PC-9 (cell line): ENCODE measurements at regions of chr6 and their contacts with region 1.

Region 1: GRCh38 chr6:16849280-16849987 is 88.2 kb upstream of the ATXN1 start:
- DNase-seq: peak; percentile 48 to 92
- H3K4me3 ChIP-seq: peak overlapping the region; percentile 43; the same call in 1 of the 2 replicates
- H3K27ac ChIP-seq: peak overlapping the region; percentile 91
- H3K4me1 ChIP-seq: peaks cover 56% of the 10 kb centered on the region
- H3K27me3 ChIP-seq: no peaks in the 10 kb centered on the region
- CTCF ChIP-seq: no peak

Region 2: DNA sequence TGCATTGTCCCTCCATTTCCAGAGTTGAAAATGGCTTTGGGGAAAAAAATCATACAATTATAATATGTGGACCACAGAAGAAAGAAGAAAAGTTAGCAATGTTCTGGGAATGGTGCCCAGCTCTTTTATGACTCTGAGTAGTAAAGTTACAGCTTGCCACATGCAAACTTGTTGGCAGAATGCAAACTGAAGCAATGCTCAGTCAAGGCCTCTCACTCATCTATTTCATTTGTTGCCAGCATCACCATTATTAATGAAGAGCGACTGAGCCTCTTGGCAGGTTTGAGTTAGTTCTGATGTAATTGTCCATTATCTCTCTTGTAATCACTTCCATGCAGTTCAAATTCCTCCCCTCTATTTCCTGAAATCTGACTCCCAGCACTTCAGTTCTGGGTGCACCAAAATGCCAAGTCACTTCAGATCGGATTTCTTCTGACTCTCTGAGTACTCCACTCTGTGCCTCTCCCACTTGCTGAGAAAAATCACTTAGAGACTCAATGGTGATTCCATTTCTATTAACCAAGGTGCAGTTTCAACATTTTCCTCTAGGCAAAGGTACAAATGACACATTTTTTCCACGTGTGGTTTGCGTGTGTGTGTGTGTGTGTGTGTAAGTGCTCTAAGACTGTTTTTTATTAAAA is 98.1 kb after region 1 on chr6:
- CTCF ChIA-PET with region 1: no interaction called
- POLR2A ChIA-PET with region 1: interaction called, 3 read pairs
- intact Hi-C with region 1: loop called (anchors 1 kb)
- DNase-seq: peak; percentile 70 to 95
- H3K4me3 ChIP-seq: peak overlapping the region; percentile 34; the same call in 1 of the 2 replicates
- H3K27ac ChIP-seq: peak overlapping the region; percentile 92
- H3K4me1 ChIP-seq: peaks cover 23% of the 10 kb centered on the region
- H3K27me3 ChIP-seq: no peaks in the 10 kb centered on the region
- CTCF ChIP-seq: no peak